Transverse colon (tissue), 4 donors: ENCODE measurements at regions of chr12 and their contacts with region 1.

Region 1: DNA sequence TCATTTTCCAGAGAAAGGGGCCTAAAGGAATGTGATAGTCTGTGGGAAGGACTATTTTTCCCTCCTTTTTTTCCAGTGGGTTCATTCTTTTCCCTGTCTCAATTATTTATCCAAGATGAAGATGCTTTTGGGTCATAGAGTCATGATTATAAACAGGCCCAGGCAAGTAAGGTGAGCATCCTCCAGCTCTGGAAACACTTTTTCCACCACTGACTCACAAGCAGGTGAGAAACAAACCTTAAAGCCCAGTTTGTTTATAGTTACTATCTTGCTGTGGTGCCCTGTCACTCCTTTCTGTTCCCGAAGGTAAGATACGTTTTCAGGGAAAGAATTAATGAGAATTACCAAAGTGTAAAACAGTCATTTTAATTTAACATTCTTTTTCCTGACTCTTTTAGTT is 107.7 kb upstream of the IFNG-AS1 start:
- DNase-seq: no peak
- H3K4me3 ChIP-seq: no peak overlapping the region
- H3K27ac ChIP-seq: no peak overlapping the region
- H3K4me1 ChIP-seq: no peaks in the 10 kb centered on the region
- H3K27me3 ChIP-seq: no peaks in the 10 kb centered on the region
- CTCF ChIP-seq: no peak
- EP300 ChIP-seq: no peak
- POLR2A ChIP-seq: no peak

Region 2: DNA sequence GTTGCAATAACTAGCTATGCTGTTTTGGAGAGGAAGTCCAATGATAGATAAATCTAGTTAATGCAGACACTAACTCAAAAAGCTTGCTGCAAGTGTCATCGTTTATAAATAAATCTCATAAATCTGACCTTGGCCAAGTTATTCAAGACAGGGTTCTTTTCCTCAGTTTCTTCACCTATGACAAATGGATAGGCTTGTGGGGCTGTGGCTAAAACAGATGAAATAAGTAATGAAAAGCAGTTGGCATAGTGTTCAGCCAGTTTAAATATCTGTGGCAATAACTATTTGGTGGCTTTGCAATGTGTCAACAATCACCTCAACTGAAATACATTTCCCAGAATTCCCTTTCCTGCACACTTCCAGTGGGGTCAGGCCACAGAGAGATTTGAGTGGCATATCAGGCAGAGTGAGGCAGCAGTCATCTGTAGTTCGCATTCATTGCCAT is 63.1 kb before region 1 on chr12:
- in situ Hi-C with region 1: no loop called
- intact Hi-C with region 1: loop called (anchors 2 kb)
- DNase-seq: no peak
- H3K4me3 ChIP-seq: no peak overlapping the region
- H3K27ac ChIP-seq: no peak overlapping the region
- H3K4me1 ChIP-seq: peaks cover 0 to 7% (median 0%) of the 10 kb centered on the region in 4 donors
- H3K27me3 ChIP-seq: no peaks in the 10 kb centered on the region
- CTCF ChIP-seq: no peak
- EP300 ChIP-seq: no peak
- POLR2A ChIP-seq: no peak

Region 3: DNA sequence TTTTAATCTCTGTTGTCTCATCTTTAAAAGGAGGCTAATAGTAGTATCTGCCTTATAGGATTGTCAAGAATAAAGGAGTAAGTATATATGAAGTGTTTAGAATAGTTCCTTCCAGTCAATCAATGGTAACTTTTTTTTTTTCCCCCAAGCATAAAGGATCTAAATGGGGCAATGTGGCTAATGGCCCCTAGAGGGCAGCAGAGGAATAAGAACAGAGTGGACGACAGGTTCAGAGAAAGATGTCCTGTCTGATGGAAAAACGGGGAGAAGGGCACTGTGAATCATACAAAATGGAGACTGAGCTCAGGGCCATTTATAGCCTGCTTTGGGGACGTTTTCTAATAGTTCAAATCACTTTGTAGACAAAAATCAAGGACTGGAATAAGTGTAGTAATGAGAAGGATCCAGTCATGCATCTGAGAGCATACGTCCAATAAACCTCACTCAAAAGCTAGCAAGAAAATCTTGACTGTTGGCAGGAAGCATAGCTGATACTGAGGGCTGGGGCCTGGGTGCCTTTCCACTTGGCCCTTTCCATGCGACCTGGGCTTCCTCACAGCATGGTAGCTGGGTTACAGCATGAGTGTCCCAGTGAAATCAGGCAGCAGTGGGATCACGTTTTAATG is 159.0 kb after region 1 on chr12:
- in situ Hi-C with region 1: no loop called
- intact Hi-C with region 1: no loop called
- DNase-seq: peak; percentile 63
- H3K4me3 ChIP-seq: no peak overlapping the region
- H3K27ac ChIP-seq: no peak overlapping the region
- H3K4me1 ChIP-seq: no peaks in the 10 kb centered on the region
- H3K27me3 ChIP-seq: no peaks in the 10 kb centered on the region
- CTCF ChIP-seq: peak; percentile 66 to 87 (median 82)
- EP300 ChIP-seq: no peak
- POLR2A ChIP-seq: no peak